Motor neuron (in vitro differentiated cells): ENCODE measurements at regions of chr4 and their contacts with region 1.

Region 1: DNA sequence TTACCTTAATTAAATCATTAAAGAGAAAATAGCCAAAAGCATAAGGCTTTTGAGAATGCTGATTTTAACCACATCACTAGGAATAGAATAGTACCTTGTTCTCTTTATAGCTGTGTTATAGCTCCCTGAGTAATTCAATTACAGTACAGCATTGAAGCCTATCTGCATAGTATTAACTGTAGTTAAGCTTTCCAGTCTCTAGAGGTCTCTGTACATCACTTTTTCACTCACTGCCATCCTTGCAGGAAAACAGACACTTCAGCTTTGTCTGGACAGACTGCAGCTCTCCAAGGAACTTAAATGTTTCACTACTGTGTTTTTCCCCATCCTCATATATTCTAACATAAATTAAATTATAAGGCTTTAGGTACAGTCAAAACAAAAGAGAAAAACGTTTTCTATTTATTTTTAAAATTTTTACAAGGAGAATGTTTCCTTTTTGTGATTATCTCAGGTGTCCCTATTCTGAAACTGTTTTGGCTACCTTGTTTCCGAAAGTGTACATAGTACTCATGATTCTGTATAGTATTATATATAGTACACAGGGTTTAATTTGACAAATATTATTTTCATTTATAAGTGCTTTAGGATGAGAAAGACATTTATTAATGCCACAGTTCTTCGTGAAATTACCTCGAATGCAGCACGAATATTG is 407.9 kb downstream of the PCDH18 start:
- ATAC-seq: peak; percentile 84 to 100 (median 94)
- H3K4me3 ChIP-seq: no peak overlapping the region
- H3K27ac ChIP-seq: no peak overlapping the region
- H3K4me1 ChIP-seq: peaks cover 0 to 3% of the 10 kb centered on the region in 2 donors

Region 2: DNA sequence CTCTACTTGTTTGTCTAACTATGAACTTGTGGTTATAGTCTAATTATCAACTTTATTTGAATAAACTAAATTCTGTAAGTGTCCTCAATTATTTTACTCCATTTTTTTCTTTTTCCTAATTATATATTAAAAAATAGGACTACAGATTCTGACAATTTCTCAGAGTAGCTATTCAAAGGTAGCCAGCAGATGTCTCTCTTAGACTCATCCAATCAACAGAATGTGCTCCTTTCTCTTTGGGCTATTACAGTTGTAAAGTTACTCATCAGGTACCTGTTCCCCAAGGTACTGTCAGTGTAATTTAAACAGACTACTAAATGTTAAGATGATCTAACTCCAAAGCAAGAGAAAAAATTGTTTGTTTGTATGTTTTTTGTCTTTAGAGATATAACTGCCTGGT is 159.3 kb after region 1 on chr4:
- in situ Hi-C with region 1: no loop called
- ATAC-seq: peak in 2 of 8 experiments; percentile 34 to 40
- H3K4me3 ChIP-seq: no peak overlapping the region
- H3K27ac ChIP-seq: no peak overlapping the region
- H3K4me1 ChIP-seq: no peaks in the 10 kb centered on the region

Region 3: GRCh38 chr4:137370206-137370633 is 245.8 kb after region 1 on chr4:
- in situ Hi-C with region 1: no loop called
- ATAC-seq: peak in 2 of 8 experiments; percentile 47 to 59
- H3K4me3 ChIP-seq: no peak overlapping the region
- H3K27ac ChIP-seq: no peak overlapping the region
- H3K4me1 ChIP-seq: no peaks in the 10 kb centered on the region

Region 4: DNA sequence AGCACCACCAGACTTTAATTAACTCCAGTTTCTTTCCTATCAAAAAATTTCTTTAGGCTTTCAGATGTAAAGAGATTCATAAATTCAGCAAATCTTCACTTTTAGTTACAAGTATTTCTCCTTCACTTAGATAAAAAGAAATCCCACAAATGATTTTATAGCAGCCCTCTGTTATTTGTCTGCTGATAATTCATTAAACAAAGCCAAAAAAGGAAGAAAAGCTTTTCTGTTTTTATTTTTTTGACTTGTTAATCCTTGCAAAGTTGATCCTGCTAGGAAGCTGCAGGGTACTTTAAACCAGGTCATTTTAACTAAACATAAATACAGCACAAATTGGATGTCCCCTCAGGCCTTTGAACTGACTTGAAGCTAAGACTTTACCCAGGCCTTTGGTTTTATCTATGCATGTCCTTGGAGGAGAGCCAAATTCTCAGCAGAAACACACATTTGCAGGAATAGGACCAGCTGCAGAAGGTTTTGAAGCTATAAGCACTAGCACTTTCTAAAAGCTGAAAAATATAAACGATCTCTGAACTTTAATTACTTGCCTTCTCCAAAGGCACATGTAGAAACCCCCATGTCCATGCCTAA is 350.4 kb after region 1 on chr4:
- in situ Hi-C with region 1: no loop called
- ATAC-seq: peak in 4 of 8 experiments; percentile 58 to 94 (median 74)
- H3K4me3 ChIP-seq: no peak overlapping the region
- H3K27ac ChIP-seq: no peak overlapping the region
- H3K4me1 ChIP-seq: peaks cover 0 to 8% of the 10 kb centered on the region in 2 donors

Region 5: GRCh38 chr4:137510557-137511265 is 386.3 kb after region 1 on chr4:
- in situ Hi-C with region 1: loop called in 2 of 9 experiments (anchors 25 kb)
- ATAC-seq: peak; percentile 66 to 100 (median 99)
- H3K4me3 ChIP-seq: no peak overlapping the region
- H3K27ac ChIP-seq: peak overlapping the region in 1 of 2 donors; percentile 35
- H3K4me1 ChIP-seq: peaks cover 12 to 13% of the 10 kb centered on the region in 2 donors

Region 6: DNA sequence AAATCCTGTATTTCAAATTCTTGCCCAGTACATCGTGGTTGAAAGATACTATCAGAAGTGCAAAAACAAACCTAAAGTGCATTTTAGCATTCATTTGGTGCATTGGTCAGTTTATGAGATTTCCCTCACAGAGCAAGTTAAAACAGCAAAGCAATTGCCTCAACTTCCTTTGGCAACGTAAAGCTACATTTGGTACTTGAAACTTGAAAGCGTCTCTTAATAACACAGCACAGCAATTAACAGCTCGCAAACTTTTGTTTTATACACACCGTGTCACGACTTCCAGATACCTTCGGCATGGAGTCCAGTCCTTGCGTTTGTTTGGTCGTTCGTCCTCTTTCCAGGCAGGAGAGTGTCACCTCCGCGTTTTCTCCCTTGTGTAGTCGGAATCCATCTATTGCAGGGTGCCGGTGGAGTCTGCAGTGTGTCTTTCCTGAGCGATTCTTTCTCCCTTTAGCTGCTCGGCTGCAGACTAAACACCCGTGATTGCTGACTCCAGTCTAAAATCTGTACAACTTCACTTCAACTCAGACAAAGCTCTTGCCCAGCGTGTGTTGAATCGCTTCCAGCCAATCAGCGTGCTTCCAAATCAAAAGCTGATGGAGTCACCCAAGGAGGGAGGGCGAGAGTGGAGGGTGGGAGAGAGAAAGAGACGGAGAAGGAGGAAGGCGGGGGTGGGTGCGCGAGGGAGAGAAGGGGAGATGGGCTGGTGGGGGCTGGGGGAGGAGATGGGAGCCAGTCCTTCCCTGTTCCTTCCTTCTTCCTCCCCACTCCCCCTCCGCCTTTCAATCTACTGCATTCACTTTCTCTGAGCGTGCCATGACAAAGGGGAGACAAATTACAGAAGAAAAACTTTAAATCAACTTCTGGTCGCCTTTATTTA is 407.8 kb after region 1 on chr4 and contains the start of gene PCDH18:
- in situ Hi-C with region 1: loop called in 1 of 9 experiments (anchors 25 kb)
- ATAC-seq: peak; percentile 80 to 88 (median 86)
- H3K4me3 ChIP-seq: peak within 1 kb of the TSS; percentile 41 to 66 (median 59)
- H3K27ac ChIP-seq: peak within 1 kb of the TSS; percentile 11 to 76
- H3K4me1 ChIP-seq: peaks cover 16 to 42% of the 10 kb centered on the region in 2 donors
- total RNA-seq, gene PCDH18: 12.3 to 57.7 (median 28.2) TPM

Region 7: DNA sequence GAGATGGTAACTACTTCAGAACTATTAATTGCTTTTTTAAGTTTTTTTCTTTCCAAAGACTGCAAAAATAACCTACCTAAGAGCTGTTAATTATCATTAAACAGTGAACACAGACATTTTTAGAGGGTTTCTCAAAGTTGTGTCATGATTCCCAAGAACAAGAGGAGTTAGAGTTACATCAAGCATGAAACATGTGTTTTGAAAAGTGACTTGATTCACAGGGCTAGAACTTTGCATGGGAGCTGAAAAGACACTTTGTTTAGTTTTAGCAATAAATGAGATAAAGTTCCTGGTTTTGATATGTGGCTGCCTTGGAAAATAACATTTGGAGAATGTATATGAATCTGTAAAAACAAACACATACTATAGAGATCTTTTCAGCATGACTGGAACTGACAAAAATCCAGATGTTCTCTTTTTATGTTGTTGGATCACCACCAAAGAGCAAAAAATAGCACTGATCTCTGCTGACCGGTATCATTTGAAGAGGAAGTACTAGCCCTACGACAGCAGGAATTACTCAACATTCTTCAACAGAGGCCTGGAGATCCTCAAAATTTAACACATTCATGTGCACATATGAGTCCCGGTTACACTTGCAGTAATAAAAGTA is 580.9 kb after region 1 on chr4:
- in situ Hi-C with region 1: no loop called
- ATAC-seq: peak in 3 of 8 experiments; percentile 29 to 72 (median 71)
- H3K4me3 ChIP-seq: no peak overlapping the region
- H3K27ac ChIP-seq: no peak overlapping the region
- H3K4me1 ChIP-seq: no peaks in the 10 kb centered on the region

Region 8: GRCh38 chr4:138680989-138681604 is 1556.7 kb after region 1 on chr4:
- in situ Hi-C with region 1: loop called in 2 of 9 experiments (anchors 25 kb)
- ATAC-seq: peak; percentile 73 to 92 (median 82)
- H3K4me3 ChIP-seq: no peak overlapping the region
- H3K27ac ChIP-seq: no peak overlapping the region
- H3K4me1 ChIP-seq: peaks cover 8 to 14% of the 10 kb centered on the region in 2 donors